H1 (cell line): ENCODE measurements at regions of chr5 and their contacts with region 1.

Region 1: GRCh38 chr5:135887351-135887864 is 8.2 kb downstream of the IL9 start:
- DNase-seq: peak; percentile 31 to 80
- H3K4me3 ChIP-seq: peak overlapping the region in 1 of 4 experiments; percentile 41; a peak in 2 of 8 replicates
- H3K27ac ChIP-seq: no peak overlapping the region
- H3K4me1 ChIP-seq: peaks cover 0 to 5% (median 3%) of the 10 kb centered on the region in 4 experiments; a peak in 2 of 7 replicates
- H3K27me3 ChIP-seq: peaks cover 0 to 6% (median 4%) of the 10 kb centered on the region in 4 experiments; a peak in 2 of 7 replicates
- CTCF ChIP-seq: peak; percentile 65 to 83 (median 73)
- EP300 ChIP-seq: no peak
- POLR2A ChIP-seq: no peak
- RAD21 ChIP-seq: peak; percentile 84 to 85

Region 2: DNA sequence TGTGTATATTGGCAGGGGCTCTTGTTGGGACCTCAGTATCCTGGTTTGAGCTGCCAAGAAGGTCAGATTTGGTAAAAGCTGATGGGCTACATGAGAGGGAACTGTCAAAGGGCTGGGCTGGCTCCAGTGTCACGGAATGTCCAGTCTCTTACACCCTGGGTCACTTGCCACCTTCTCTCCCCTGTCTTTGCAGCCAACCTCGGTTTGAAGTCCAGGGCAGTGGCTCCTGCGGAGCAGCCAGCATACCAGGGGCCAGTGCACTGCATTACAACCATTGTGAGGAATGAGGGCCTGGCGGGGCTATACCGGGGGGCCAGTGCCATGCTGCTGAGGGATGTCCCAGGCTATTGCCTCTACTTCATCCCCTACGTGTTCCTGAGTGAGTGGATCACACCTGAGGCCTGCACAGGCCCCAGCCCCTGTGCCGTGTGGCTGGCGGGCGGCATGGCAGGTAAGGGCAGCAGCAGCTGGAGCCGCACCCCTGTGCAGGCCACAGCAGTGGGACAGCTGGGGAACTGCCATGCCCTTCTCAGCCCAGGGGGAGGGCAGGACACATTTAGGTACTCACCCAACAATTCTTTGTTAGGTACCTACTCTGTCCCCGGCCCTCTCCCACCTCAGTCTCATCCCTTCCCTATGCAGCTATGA is 16.0 kb before region 1 on chr5:
- CTCF ChIA-PET with region 1: interaction called, 30 read pairs
- POLR2A ChIA-PET with region 1: no interaction called
- DNase-seq: no peak
- H3K4me3 ChIP-seq: no peak overlapping the region
- H3K27ac ChIP-seq: no peak overlapping the region
- H3K4me1 ChIP-seq: no peaks in the 10 kb centered on the region
- H3K27me3 ChIP-seq: no peaks in the 10 kb centered on the region; a peak in 1 of 7 replicates
- CTCF ChIP-seq: no peak
- EP300 ChIP-seq: no peak
- POLR2A ChIP-seq: no peak
- RAD21 ChIP-seq: no peak

Region 3: DNA sequence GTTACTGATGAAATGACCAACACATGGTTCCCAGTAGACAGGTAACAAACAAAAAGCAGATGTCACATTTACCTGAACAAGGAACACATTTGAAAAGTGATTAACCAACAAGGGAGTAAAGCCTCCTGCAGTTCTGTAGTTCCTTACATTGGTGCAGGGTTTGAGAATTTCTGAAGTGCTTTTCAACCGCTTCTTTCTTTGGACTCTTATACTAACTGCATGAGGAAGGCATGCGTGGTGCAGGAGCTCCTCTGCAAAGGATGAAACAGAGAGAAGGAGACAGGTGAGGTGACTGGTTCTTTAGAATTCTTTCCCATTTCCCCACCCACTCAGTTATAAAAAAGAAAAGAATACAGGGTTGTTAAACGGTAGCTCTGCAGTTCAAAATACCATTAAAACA is 12.9 kb after region 1 on chr5:
- CTCF ChIA-PET with region 1: interaction called, 24 read pairs
- POLR2A ChIA-PET with region 1: no interaction called
- DNase-seq: no peak
- H3K4me3 ChIP-seq: no peak overlapping the region
- H3K27ac ChIP-seq: no peak overlapping the region
- H3K4me1 ChIP-seq: no peaks in the 10 kb centered on the region
- H3K27me3 ChIP-seq: no peaks in the 10 kb centered on the region
- CTCF ChIP-seq: no peak
- EP300 ChIP-seq: no peak
- POLR2A ChIP-seq: no peak
- RAD21 ChIP-seq: no peak

Region 4: GRCh38 chr5:136073714-136074529 is 186.5 kb after region 1 on chr5:
- CTCF ChIA-PET with region 1: interaction called, 12 read pairs
- POLR2A ChIA-PET with region 1: no interaction called
- DNase-seq: peak in 1 of 2 experiments; percentile 38
- H3K4me3 ChIP-seq: no peak overlapping the region
- H3K27ac ChIP-seq: no peak overlapping the region
- H3K4me1 ChIP-seq: no peaks in the 10 kb centered on the region
- H3K27me3 ChIP-seq: no peaks in the 10 kb centered on the region; a peak in 1 of 7 replicates
- CTCF ChIP-seq: no peak
- EP300 ChIP-seq: no peak
- POLR2A ChIP-seq: no peak
- RAD21 ChIP-seq: no peak